ENCODE measurements at regions of chr14 and their contacts with region 1.

Region 1: DNA sequence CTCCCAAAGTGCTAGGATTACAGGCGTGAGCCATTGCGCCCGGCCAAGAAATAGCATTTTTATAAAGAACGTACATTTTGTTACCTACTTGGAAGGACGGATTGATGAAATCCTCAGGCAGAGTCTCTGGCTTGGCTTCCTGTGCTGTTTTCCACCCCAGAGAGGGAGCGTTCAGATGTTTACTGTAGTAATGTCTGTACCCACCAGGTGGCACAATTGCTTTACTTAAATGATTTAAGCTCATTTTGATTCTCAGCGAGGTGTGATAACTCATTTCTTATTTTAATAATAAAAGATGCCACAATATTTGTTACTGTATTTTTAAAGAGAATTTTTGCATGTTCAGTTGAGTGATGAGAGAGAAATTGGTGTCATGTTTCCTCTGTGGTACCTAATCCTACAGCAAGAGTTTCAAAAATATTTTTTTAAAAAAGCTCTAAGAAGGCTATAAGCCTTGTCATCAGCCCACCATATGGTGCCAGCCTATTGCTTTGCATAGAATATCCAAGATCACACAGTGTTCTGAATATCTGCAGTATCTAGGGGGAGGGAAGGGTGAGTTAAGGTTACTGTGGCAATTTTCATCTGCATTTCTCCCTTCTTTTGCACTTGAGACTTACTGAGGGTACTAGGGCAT is 82.6 kb upstream of the TRAF3 start:
- DNase-seq: peak; percentile 43
- ATAC-seq: peak; percentile 87
- H3K4me3 ChIP-seq: no peak overlapping the region
- H3K27ac ChIP-seq: no peak overlapping the region; the same call in 1 of the 2 replicates
- H3K4me1 ChIP-seq: peaks cover 15% of the 10 kb centered on the region
- H3K27me3 ChIP-seq: no peaks in the 10 kb centered on the region
- CTCF ChIP-seq: peak; percentile 50 to 71 (median 64); a peak in 5 of 6 replicates
- EP300 ChIP-seq: no peak
- POLR2A ChIP-seq: no peak
- RAD21 ChIP-seq: peak; percentile 85

Region 2: GRCh38 chr14:102524466-102525218 is 170.0 kb before region 1 on chr14:
- CTCF ChIA-PET with region 1: interaction called, 25 read pairs
- POLR2A ChIA-PET with region 1: interaction called, 3 read pairs
- RAD21 ChIA-PET with region 1: interaction called, 16 read pairs
- SMC1A ChIA-PET with region 1: interaction called, 20 read pairs
- in situ Hi-C with region 1: no loop called
- intact Hi-C with region 1: loop called (anchors 5 kb)
- DNase-seq: peak; percentile 96
- ATAC-seq: peak; percentile 99
- H3K4me3 ChIP-seq: peak overlapping the region; percentile 84
- H3K27ac ChIP-seq: peak overlapping the region; percentile 43
- H3K4me1 ChIP-seq: no peaks in the 10 kb centered on the region; the same call in 1 of the 2 replicates
- H3K27me3 ChIP-seq: no peaks in the 10 kb centered on the region
- CTCF ChIP-seq: peak; percentile 96 to 97 (median 97)
- EP300 ChIP-seq: no peak
- POLR2A ChIP-seq: peak; percentile 83
- RAD21 ChIP-seq: peak; percentile 81

Region 3: GRCh38 chr14:102708494-102708893 is 13.8 kb after region 1 on chr14:
- CTCF ChIA-PET with region 1: interaction called, 34 read pairs
- POLR2A ChIA-PET with region 1: interaction called, 3 read pairs
- RAD21 ChIA-PET with region 1: interaction called, 28 read pairs
- SMC1A ChIA-PET with region 1: interaction called, 30 read pairs
- in situ Hi-C with region 1: no loop called
- intact Hi-C with region 1: no loop called
- DNase-seq: peak; percentile 88
- ATAC-seq: peak; percentile 93
- H3K4me3 ChIP-seq: no peak overlapping the region
- H3K27ac ChIP-seq: peak overlapping the region; percentile 45
- H3K4me1 ChIP-seq: peaks cover 9% of the 10 kb centered on the region
- H3K27me3 ChIP-seq: no peaks in the 10 kb centered on the region
- CTCF ChIP-seq: no peak
- EP300 ChIP-seq: peak in 1 of 2 experiments; percentile 24; a peak in 2 of 4 replicates
- POLR2A ChIP-seq: no peak
- RAD21 ChIP-seq: 0 out of 2 replicates have a peak, but pooled peaks have one; percentile 4

Region 4: GRCh38 chr14:102779574-102780320 is 85.1 kb after region 1 on chr14:
- CTCF ChIA-PET with region 1: interaction called, 107 read pairs
- POLR2A ChIA-PET with region 1: interaction called, 11 read pairs
- RAD21 ChIA-PET with region 1: interaction called, 104 read pairs
- SMC1A ChIA-PET with region 1: interaction called, 119 read pairs
- in situ Hi-C with region 1: no loop called
- intact Hi-C with region 1: loop called (anchors 1 kb)
- DNase-seq: no peak
- ATAC-seq: no peak
- H3K4me3 ChIP-seq: peak overlapping the region; percentile 90
- H3K27ac ChIP-seq: peak overlapping the region; percentile 98
- H3K4me1 ChIP-seq: peaks cover 31% of the 10 kb centered on the region
- H3K27me3 ChIP-seq: no peaks in the 10 kb centered on the region
- CTCF ChIP-seq: peak in 1 of 3 experiments; percentile 24; a peak in 1 of 6 replicates
- EP300 ChIP-seq: no peak
- POLR2A ChIP-seq: no peak
- RAD21 ChIP-seq: peak; percentile 13; the same call in 1 of the 2 replicates

Region 5: GRCh38 chr14:102819176-102819628 is 124.6 kb after region 1 on chr14:
- CTCF ChIA-PET with region 1: interaction called, 5 read pairs
- POLR2A ChIA-PET with region 1: no interaction called
- RAD21 ChIA-PET with region 1: interaction called, 21 read pairs
- SMC1A ChIA-PET with region 1: interaction called, 9 read pairs
- in situ Hi-C with region 1: no loop called
- intact Hi-C with region 1: no loop called
- DNase-seq: peak; percentile 89
- ATAC-seq: peak; percentile 90
- H3K4me3 ChIP-seq: peak overlapping the region; percentile 58
- H3K27ac ChIP-seq: peak overlapping the region; percentile 93
- H3K4me1 ChIP-seq: peaks cover 62% of the 10 kb centered on the region
- H3K27me3 ChIP-seq: no peaks in the 10 kb centered on the region
- CTCF ChIP-seq: no peak
- EP300 ChIP-seq: peak; percentile 92 to 94
- POLR2A ChIP-seq: peak; percentile 77
- RAD21 ChIP-seq: no peak

Region 6: DNA sequence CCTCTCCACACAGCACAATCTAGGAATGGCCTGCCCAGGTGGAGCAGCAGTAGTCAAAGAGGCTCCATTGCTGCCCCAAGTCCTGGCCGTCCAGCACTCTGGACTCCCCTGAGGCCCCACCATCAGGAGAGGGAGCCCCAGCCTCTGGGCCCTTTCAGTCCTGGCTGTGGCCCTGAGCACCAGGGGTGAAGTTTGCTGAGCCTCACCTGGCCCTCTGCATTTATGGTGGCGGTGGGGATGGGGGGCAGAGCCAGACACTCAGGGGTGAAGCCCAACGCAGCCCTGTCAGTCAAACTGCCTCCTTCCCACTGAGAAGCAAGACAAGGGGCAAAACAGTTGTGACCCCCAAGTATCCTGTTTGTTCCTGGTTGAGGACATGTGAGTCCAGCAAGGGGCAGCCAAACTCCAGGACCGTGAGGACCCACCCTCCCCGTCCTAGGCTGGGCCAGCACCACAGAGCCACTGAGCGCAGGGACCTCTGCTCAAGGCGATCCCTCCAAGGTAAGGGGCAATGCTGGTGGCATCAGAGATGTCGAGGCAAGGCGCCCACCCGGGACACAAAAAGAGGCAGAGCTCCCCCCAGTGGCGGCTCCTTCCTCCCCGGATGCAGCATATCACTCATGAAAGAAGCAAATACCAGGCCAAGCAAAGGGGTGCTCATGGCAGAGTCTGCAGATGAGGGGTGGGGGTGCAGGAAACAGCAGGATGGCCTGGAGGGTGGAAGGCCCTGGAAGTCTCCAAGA is 223.0 kb after region 1 on chr14:
- CTCF ChIA-PET with region 1: interaction called, 47 read pairs
- POLR2A ChIA-PET with region 1: interaction called, 3 read pairs
- RAD21 ChIA-PET with region 1: interaction called, 20 read pairs
- SMC1A ChIA-PET with region 1: interaction called, 52 read pairs
- in situ Hi-C with region 1: loop called (anchors 5 kb)
- intact Hi-C with region 1: loop called (anchors 1 kb)
- DNase-seq: no peak
- ATAC-seq: peak; percentile 68
- H3K4me3 ChIP-seq: no peak overlapping the region
- H3K27ac ChIP-seq: peak overlapping the region; percentile 17
- H3K4me1 ChIP-seq: peaks cover 22% of the 10 kb centered on the region
- H3K27me3 ChIP-seq: no peaks in the 10 kb centered on the region; a peak in 2 of 4 replicates
- CTCF ChIP-seq: peak; percentile 73 to 82 (median 75)
- EP300 ChIP-seq: no peak
- POLR2A ChIP-seq: peak; percentile 45
- RAD21 ChIP-seq: peak; percentile 84

Region 7: DNA sequence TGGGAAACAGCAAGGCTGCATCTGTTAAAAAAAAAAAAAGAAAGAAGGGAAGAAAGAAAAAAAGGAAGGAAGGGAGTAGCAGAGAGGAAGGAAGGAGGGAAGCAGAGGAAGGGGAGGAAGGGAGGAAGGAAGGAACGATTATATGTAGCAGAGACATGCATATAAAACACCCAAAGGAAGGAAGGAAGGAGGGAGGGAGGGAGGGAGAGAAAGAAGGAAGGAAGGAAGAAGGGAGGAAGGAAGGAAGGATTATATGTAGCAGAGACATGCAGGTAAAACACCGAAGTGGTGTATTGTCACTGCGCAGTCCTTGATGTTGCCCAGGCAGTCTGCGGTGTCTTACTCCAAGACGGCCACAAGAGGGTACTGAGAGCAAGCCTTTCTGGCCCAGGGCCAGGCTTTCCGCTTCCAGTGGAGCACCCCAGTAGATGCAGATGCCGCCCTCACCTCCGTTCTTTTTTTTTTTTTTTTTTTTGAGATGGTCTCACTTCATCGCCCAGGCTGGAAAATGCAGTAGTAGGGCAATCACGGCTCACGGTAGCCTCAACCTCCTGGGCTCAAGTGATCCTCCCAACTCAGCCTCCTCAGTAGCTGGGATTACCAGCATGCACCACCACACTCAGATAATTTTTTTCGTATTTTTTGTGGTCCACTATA is 383.6 kb after region 1 on chr14:
- CTCF ChIA-PET with region 1: interaction called, 25 read pairs
- POLR2A ChIA-PET with region 1: no interaction called
- RAD21 ChIA-PET with region 1: interaction called, 13 read pairs
- SMC1A ChIA-PET with region 1: interaction called, 6 read pairs
- in situ Hi-C with region 1: no loop called
- intact Hi-C with region 1: no loop called
- DNase-seq: peak; percentile 48
- ATAC-seq: peak; percentile 74
- H3K4me3 ChIP-seq: no peak overlapping the region
- H3K27ac ChIP-seq: no peak overlapping the region
- H3K4me1 ChIP-seq: peaks cover 8% of the 10 kb centered on the region
- H3K27me3 ChIP-seq: no peaks in the 10 kb centered on the region; a peak in 1 of 4 replicates
- CTCF ChIP-seq: peak; percentile 75 to 93 (median 86)
- EP300 ChIP-seq: no peak
- POLR2A ChIP-seq: no peak
- RAD21 ChIP-seq: peak; percentile 83